H1 (cell line): ENCODE measurements at regions of chr11 and their contacts with region 1.

Region 1: GRCh38 chr11:34357701-34358257 is at the start of gene ABTB2:
- DNase-seq: peak; percentile 96 to 98
- H3K4me3 ChIP-seq: peak within 1 kb of the TSS; percentile 52 to 87 (median 68)
- H3K27ac ChIP-seq: peak within 1 kb of the TSS; percentile 84; the same call in 1 of the 2 replicates
- H3K4me1 ChIP-seq: peaks cover 0 to 21% (median 8%) of the 10 kb centered on the region in 4 experiments; a peak in 5 of 7 replicates
- H3K27me3 ChIP-seq: peaks cover 5 to 31% (median 24%) of the 10 kb centered on the region in 4 experiments
- CTCF ChIP-seq: no peak
- EP300 ChIP-seq: no peak
- POLR2A ChIP-seq: peak; percentile 66 to 76
- RAD21 ChIP-seq: 0 out of 4 replicates have a peak, but pooled peaks of 1 of the 2 experiments have one; percentile 6
- total RNA-seq, gene ABTB2: 10.2 and 10.6 TPM in 2 replicates

Region 2: GRCh38 chr11:34149786-34150185 is 208.0 kb before region 1 on chr11:
- CTCF ChIA-PET with region 1: interaction called, 42 read pairs
- POLR2A ChIA-PET with region 1: interaction called, 3 read pairs
- DNase-seq: peak in 1 of 2 experiments; percentile 59
- H3K4me3 ChIP-seq: no peak overlapping the region
- H3K27ac ChIP-seq: no peak overlapping the region
- H3K4me1 ChIP-seq: no peaks in the 10 kb centered on the region
- H3K27me3 ChIP-seq: no peaks in the 10 kb centered on the region
- CTCF ChIP-seq: peak; percentile 61 to 70 (median 65)
- EP300 ChIP-seq: no peak
- POLR2A ChIP-seq: no peak
- RAD21 ChIP-seq: peak; percentile 67 to 77

Region 3: GRCh38 chr11:34165518-34166277 is 192.1 kb before region 1 on chr11:
- CTCF ChIA-PET with region 1: interaction called, 30 read pairs
- POLR2A ChIA-PET with region 1: interaction called, 4 read pairs
- DNase-seq: no peak
- H3K4me3 ChIP-seq: no peak overlapping the region
- H3K27ac ChIP-seq: no peak overlapping the region
- H3K4me1 ChIP-seq: no peaks in the 10 kb centered on the region
- H3K27me3 ChIP-seq: no peaks in the 10 kb centered on the region
- CTCF ChIP-seq: peak in 2 of 3 experiments; percentile 37 to 40; a peak in 3 of 4 replicates
- EP300 ChIP-seq: no peak
- POLR2A ChIP-seq: no peak
- RAD21 ChIP-seq: peak; percentile 29 to 45; a peak in 2 of 4 replicates

Region 4: DNA sequence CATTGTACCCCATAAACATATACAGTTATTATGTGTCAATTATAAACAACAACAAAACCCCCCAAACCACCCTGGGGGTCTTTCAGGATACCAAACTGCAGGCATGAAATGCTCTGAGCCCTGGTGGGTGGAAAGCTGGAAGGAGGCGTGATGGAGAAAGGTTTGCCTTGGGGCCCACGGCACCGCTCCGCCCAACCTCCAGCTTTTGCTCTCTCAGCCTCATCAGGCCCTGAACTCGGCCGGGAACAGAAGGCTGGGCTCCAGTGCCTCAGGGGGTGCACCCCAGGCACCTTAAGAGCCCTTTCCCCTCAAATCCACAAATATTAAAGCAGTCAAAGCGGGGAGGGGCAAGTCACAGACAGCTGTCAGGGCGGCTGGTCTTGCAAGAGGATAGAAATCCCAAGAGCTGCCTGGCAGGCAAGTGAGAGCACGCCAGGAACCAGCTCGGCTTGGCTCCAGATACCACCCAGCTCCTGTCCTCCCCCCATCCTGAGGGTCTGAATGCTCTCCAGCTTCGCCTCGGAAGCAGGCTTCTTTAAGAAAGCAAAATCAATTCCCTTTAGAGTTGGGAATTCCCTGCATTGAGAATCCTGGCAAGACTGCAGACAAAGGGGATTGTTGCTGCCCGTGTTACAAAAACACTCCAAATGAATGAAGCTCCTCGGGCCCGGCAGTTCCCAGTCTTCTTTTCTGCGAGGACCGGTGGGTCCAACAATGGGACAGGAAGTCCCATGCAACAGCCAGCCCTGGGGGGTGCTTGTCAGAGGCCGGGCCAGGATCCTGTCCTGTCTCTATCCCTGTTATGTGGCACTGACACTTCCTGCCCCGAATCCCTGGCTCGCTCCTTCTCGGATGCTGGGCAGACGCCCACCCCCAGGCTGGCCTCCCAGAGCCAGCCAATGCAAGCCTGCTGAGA is 171.6 kb before region 1 on chr11:
- CTCF ChIA-PET with region 1: interaction called, 15 read pairs
- POLR2A ChIA-PET with region 1: interaction called, 9 read pairs
- DNase-seq: peak in 1 of 2 experiments; percentile 64
- H3K4me3 ChIP-seq: peak overlapping the region in 2 of 4 experiments; percentile 7 to 13; a peak in 3 of 8 replicates
- H3K27ac ChIP-seq: peak overlapping the region; percentile 20; the same call in 1 of the 2 replicates
- H3K4me1 ChIP-seq: peaks cover 17 to 32% (median 21%) of the 10 kb centered on the region in 4 experiments
- H3K27me3 ChIP-seq: no peaks in the 10 kb centered on the region
- CTCF ChIP-seq: no peak
- EP300 ChIP-seq: no peak
- POLR2A ChIP-seq: no peak
- RAD21 ChIP-seq: no peak

Region 5: DNA sequence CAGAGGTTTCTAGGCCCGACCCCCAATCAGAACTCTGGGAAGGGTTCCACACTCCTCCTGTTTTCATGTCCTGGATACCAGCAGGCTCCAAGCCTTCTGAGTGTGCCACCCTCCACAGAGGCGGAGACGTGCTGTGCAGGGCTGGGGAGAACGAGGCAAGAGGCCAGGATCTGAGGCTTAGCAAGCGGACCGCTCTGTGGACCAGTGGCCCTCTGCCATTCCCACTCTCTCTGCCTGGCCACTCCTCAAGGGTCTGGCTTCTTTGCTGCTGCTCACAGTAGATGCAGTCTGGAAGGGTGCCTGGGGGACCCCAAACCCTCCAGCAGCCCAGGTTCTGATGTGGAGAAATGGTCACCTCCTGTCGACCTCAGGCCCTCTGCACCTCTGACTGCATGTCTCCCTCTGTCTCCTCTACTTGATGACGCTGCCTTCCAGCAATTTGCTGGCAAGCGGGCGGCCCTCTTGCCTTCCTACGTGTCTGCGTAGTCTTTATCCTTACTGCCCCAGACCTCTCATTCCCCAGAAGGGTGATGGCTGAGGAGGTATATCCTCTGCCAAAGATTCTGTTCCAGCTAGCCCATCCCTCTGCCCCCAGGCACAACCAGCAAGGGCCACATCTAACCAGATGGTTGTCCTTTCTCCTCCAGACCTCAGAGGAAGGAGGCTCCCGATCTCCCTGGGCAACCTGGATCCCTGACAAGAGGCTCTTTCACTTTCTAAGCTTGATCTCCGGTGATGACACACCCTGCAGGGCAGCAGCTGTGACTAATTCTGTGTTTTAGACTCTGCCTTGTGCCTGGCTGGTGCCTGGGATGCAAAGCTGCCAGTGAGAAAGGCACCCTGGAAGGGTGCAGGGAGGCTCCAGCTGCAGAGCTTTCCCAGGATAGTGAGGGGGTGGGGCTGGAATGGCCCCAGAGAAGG is 165.0 kb before region 1 on chr11:
- CTCF ChIA-PET with region 1: interaction called, 14 read pairs
- POLR2A ChIA-PET with region 1: interaction called, 9 read pairs
- DNase-seq: no peak
- H3K4me3 ChIP-seq: no peak overlapping the region
- H3K27ac ChIP-seq: no peak overlapping the region
- H3K4me1 ChIP-seq: peaks cover 8 to 24% (median 11%) of the 10 kb centered on the region in 4 experiments
- H3K27me3 ChIP-seq: no peaks in the 10 kb centered on the region
- CTCF ChIP-seq: no peak
- EP300 ChIP-seq: no peak
- POLR2A ChIP-seq: no peak
- RAD21 ChIP-seq: no peak

Region 6: DNA sequence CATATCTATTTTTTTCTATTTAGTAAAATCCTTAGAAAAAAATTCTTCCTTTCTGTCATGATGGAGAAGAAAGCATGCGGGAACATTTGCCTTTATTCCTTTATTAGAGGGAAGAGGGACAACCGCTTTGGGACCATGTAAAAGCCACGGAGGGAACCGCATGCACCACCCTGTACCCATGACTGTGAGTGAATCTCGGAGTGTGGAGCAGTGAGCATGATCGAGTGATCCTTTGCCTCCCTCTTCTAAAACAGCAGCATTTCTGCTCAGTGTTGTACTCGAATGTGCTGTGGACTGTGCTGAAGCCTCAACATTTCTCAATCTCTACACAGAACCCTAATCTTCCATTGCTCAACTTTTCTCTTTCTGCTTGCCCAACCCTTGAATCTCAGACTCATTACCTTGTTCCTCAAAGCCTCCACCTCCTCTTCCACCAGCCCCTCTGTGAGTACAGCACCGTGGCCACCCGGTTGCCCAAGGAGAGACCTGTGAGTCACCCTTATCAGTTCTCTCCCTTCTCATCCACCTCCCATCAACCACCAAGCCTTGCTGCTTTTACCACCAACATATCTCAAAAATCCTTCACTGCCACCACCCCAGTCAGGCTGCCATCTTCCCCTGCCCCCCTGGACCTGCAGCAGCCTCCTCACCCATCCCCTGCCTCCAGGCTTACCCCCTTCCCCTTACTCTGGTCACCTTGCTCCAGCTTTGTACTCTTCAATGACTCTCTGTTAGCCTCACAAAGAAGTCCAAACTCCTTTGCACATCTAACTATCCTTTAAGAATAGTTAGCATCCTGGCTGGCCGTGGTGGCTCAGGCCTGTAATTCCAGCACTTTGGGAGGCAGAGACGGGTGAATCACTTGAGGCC is 149.3 kb before region 1 on chr11:
- CTCF ChIA-PET with region 1: interaction called, 20 read pairs
- POLR2A ChIA-PET with region 1: no interaction called
- DNase-seq: no peak
- H3K4me3 ChIP-seq: no peak overlapping the region
- H3K27ac ChIP-seq: no peak overlapping the region
- H3K4me1 ChIP-seq: peaks cover 3 to 23% (median 13%) of the 10 kb centered on the region in 4 experiments
- H3K27me3 ChIP-seq: no peaks in the 10 kb centered on the region
- CTCF ChIP-seq: no peak
- EP300 ChIP-seq: no peak
- POLR2A ChIP-seq: no peak
- RAD21 ChIP-seq: no peak

Region 7: GRCh38 chr11:34344768-34345539 is 12.8 kb before region 1 on chr11:
- CTCF ChIA-PET with region 1: interaction called, 39 read pairs
- POLR2A ChIA-PET with region 1: interaction called, 20 read pairs
- DNase-seq: no peak
- H3K4me3 ChIP-seq: no peak overlapping the region
- H3K27ac ChIP-seq: no peak overlapping the region
- H3K4me1 ChIP-seq: peaks cover 0 to 5% (median 2%) of the 10 kb centered on the region in 4 experiments; a peak in 2 of 7 replicates
- H3K27me3 ChIP-seq: no peaks in the 10 kb centered on the region
- CTCF ChIP-seq: no peak
- EP300 ChIP-seq: no peak
- POLR2A ChIP-seq: no peak
- RAD21 ChIP-seq: no peak

Region 8: GRCh38 chr11:34380696-34381095 is 22.9 kb after region 1 on chr11:
- CTCF ChIA-PET with region 1: no interaction called
- POLR2A ChIA-PET with region 1: no interaction called
- DNase-seq: no peak
- H3K4me3 ChIP-seq: no peak overlapping the region
- H3K27ac ChIP-seq: no peak overlapping the region
- H3K4me1 ChIP-seq: no peaks in the 10 kb centered on the region
- H3K27me3 ChIP-seq: no peaks in the 10 kb centered on the region
- CTCF ChIP-seq: no peak
- EP300 ChIP-seq: no peak
- POLR2A ChIP-seq: no peak
- RAD21 ChIP-seq: no peak

Region 9: DNA sequence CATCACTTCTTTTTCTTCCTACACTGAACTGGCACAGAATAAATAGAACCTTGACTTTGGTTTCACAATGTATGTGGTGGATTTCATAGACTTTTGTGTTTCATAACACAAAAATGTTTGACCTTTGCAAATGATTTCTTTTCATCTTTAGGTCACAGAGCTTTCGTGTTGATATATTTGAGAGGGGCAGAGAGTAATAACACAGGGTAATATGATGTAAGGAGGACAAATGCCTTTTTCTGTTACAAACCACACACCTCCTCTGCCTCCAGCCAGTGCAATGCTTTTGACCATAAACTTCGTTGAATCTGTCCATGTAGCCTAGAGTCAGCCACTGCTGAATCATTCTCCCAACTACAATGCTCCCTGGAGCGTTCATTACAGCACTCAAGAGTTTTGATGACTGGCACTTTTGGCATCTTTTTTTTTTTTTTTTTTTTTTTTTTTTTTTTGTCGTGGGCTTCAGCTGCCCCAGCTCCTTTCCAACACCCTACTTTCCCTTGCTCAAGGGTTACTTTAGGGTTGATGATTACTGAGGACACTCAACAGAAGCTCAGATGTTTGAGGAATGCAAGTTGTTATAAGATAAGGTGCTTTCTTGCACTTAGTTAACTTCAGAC is 69.5 kb after region 1 on chr11:
- CTCF ChIA-PET with region 1: no interaction called
- POLR2A ChIA-PET with region 1: no interaction called
- DNase-seq: no peak
- H3K4me3 ChIP-seq: no peak overlapping the region
- H3K27ac ChIP-seq: no peak overlapping the region
- H3K4me1 ChIP-seq: no peaks in the 10 kb centered on the region
- H3K27me3 ChIP-seq: no peaks in the 10 kb centered on the region
- CTCF ChIP-seq: no peak
- EP300 ChIP-seq: no peak
- POLR2A ChIP-seq: no peak
- RAD21 ChIP-seq: no peak